Posterior vena cava (tissue), 2 donors: ENCODE measurements at regions of chrX and their contacts with region 1.

Region 1: DNA sequence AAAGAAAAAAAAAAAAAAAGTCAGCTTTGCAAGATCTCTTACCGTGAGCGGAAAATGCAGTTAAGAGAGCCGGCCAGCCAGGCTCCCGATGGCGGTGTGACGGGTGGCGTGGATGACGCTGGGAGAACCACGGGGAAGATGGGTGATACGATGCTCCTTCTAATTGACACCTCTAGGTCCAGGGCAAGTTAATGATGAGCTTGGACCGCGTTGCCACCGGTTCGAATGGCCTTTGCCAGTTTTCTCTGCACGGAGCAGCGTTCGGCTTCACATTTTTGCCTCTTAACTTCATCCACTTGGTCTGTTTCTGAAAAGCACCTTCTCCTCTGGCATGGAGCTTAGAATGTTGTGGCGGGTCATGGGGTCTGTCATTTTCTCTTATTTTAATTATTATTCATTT is 33.2 kb downstream of the SHOX start:
- DNase-seq: peak; percentile 26

Region 2: GRCh38 chrX:714131-714530 is 50.3 kb after region 1 on chrX:
- intact Hi-C with region 1: loop called in 1 of 2 experiments (anchors 2 kb)
- DNase-seq: no peak